ENCODE measurements at regions of chr1 and their contacts with region 1.

Region 1: DNA sequence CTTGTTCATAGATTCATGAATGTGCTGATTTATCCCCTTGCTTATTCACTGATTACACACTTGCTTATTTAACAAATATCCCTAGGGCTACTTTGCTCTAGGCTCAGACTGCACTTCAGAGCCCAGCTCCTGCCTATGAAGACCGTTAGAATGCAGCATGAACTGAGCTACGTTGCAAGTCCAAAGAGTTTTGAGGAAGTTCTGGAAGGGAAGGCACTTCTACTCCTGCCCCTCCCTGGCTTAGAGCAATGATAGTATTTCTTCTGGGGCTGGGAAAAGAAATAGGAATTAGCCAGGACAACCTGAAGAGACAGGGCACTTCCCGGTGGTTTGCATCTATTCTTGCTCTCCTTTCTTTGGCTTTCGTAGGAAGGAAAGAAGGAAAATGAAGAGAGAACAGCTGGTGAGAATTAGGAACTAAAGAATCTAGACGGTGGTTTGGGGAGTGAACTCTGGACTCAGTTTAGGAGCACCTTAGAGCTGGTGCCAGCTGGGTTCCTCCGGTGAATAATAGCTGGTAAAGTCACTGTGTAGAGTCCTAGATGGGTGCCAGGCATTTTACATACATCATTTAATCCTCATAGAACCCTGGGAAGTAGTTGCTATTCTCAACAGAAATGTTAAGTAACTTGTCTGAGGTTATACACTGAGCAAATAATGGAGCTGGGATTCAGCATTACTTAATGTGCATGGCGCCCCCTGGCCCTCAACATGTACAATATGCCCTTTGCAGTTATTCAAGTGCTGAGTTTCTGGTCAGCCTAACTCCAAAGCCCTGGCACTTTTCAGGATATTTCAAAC is 65.9 kb downstream of the NDUFS5 start:
- DNase-seq: peak; percentile 75 to 79
- ATAC-seq: peak; percentile 51 to 79 (median 56)
- H3K4me3 ChIP-seq: no peak overlapping the region
- H3K27ac ChIP-seq: no peak overlapping the region
- H3K4me1 ChIP-seq: peaks cover 30% of the 10 kb centered on the region
- H3K27me3 ChIP-seq: no peaks in the 10 kb centered on the region
- CTCF ChIP-seq: peak; percentile 57

Region 2: DNA sequence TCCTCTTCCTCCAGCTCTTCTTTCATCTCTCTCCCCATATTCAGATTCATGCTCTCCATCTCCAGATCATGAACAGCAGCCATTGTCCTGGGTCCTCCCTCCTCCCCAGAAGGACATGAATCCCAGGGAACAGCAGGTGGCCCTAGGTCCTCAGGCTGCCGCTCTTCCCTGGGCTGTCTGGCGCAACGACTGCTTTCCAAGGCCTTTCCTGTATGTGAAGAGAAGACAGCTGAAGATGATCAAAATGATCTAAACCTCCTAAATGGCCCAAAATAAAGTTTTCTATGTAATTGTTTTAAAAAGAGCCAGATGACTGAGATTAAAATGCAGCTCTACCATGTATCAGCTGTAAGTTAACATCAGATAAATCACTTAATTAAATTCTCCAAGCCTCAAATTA is 172.9 kb before region 1 on chr1:
- intact Hi-C with region 1: loop called in 1 of 2 experiments (anchors 5 kb)
- DNase-seq: peak in 1 of 2 donors; percentile 56
- ATAC-seq: peak in 3 of 4 donors; percentile 53 to 67 (median 59)
- H3K4me3 ChIP-seq: no peak overlapping the region
- H3K27ac ChIP-seq: no peak overlapping the region
- H3K4me1 ChIP-seq: no peaks in the 10 kb centered on the region
- H3K27me3 ChIP-seq: no peaks in the 10 kb centered on the region
- CTCF ChIP-seq: peak; percentile 28

Region 3: DNA sequence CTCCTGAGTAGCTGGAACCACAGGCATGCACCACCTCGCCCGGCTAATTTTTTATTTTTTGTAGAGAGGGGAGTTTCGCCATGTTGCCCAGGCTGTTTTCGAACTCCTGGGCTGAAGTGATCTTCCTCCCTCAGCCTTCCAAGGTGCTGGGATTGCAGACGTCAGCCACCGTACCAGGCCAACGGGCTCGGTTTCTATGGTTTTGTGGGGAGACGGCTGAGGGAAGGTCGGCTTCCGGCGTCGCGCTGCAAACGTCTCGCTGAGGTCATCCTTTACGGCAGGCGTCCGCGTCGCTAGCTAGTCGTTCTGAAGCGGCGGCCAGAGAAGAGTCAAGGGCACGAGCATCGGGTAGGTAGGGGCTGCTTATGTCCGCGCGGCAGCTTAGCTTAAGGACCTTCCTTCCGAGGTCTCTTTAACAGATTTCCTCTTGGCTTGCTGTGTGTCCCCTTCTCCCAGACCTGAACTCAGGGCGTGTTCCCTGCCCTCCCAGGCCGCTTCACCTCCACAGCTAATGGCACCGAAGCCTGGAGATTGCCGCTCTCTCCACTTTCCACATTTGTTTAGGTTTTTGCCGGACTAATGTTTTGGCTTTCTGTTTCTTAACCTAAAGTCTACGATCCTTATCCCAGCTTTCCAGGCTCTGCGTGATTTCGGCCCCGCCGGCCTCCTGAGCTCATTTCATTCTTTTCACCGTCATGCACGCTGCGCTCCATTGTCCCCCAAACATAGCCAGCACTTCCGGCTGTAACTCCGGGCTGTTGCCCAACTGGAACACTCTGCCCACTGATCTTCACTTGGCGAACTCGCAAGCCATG is 65.8 kb before region 1 on chr1 and contains the start of gene NDUFS5:
- intact Hi-C with region 1: loop called in 1 of 2 experiments (anchors 2 kb)
- DNase-seq: peak; percentile 92 to 96
- ATAC-seq: peak; percentile 94 to 97 (median 96)
- H3K4me3 ChIP-seq: peak within 1 kb of the TSS; percentile 94
- H3K27ac ChIP-seq: peak within 1 kb of the TSS; percentile 97
- H3K4me1 ChIP-seq: peaks cover 18% of the 10 kb centered on the region
- H3K27me3 ChIP-seq: no peaks in the 10 kb centered on the region
- CTCF ChIP-seq: no peak
- total RNA-seq, gene NDUFS5: 276 to 407 (median 350) TPM